Breast epithelium (tissue), 4 donors: ENCODE measurements at regions of chr10 and their contacts with region 1.

Region 1: DNA sequence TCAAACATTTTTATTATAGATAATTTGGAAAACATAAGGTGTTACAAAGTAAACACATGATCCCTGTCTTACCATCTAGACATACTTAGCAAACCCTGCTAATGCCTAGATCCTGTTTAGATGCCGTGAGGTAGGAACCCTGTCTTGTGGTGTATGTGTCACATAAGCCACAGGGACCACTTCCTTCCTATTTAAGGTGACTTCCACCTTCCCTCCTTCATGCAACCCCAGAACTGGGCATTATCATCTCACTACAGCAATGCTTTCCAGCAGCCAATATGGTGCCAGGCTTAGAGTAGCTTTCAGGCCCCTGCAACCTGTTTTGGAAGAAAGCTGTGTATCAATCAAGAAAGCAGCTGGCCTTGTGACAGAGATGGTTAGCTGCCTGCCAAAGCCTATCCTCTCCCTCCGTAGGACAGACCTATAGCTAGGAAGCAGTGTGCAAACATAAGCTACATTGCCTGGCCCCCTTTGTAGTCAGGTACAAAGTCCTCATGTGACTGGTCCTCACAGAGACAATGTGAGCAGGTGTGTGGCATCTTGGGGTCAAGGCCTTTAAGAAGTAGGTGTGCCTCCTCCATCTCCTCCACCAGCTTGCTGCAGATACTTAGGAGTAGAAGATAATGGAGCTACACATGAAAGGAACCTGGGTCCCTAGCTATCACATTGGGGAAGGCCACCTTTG is 146.8 kb downstream of the SPAG6 start:
- DNase-seq: no peak
- H3K4me3 ChIP-seq: no peak overlapping the region
- H3K27ac ChIP-seq: no peak overlapping the region
- H3K4me1 ChIP-seq: no peaks in the 10 kb centered on the region
- H3K27me3 ChIP-seq: peaks cover 0 to under 1% of the 10 kb centered on the region in 2 donors
- CTCF ChIP-seq: no peak
- POLR2A ChIP-seq: no peak

Region 2: DNA sequence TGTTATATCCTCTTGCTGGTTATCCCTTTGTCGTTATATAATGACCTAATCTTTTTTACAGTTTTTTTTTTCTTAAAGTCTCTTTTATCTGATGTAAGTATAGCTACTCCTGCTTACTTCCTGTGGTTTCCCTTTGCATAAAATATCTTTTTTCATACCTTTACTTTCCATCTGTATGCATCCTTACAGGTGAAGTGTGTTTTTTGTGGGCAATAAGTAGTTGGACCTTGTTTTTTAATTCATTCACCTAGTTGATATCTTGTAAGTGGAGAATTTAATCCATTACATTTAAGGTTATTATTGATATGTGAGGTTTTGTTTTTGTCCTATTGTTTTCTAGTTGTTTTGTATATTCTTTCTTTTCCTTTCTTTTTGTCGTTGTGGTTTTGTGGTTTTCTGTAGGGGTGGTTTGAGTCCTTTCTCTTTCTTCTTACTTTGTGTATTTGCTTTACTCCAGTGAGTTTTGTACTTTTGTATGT is 789.4 kb before region 1 on chr10:
- intact Hi-C with region 1: no loop called
- DNase-seq: no peak
- H3K4me3 ChIP-seq: no peak overlapping the region
- H3K27ac ChIP-seq: no peak overlapping the region
- H3K4me1 ChIP-seq: no peaks in the 10 kb centered on the region
- H3K27me3 ChIP-seq: no peaks in the 10 kb centered on the region
- CTCF ChIP-seq: no peak
- POLR2A ChIP-seq: no peak

Region 3: DNA sequence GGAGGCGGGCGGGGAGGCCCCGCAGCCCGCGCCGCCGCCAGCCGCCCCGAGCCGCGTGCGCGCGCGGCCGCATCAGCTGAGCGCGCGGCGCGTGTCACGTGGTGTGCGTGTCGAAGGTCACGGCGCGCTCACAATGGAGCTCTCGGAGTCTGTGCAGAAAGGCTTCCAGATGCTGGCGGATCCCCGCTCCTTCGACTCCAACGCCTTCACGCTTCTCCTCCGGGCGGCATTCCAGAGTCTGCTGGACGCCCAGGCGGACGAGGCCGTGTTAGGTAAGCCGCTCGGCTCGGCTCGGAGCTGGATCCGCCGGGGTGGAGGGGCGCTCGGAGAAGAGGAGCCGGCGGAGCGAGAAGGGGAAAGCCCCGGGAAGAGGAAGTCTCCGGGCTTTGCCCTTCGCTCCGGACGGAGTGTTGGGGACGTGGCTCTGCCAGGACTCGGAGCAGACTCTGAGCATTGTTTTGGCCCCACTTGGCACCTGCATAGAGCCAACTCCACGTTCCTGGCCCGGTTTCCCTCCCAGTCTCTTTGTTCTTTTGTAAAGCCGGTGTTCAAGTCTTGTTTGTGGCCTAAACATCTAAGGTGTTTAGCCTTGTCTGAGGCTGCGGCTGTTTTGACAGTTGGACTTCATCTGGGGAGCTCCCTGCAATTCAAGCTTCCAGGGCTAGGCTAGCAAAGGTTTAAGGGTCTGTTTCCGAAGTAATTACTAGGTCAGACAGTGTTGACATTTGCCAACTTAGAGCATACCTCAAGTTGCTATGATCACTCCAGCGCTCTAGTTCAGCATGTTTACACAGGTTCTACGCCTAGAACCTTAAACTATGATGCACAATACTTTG is 175.6 kb before region 1 on chr10 and contains the start of gene COMMD3:
- intact Hi-C with region 1: no loop called
- DNase-seq: peak; percentile 79 to 83
- H3K4me3 ChIP-seq: peak within 1 kb of the TSS; percentile 79 to 83 (median 83)
- H3K27ac ChIP-seq: peak within 1 kb of the TSS; percentile 93 to 94
- H3K4me1 ChIP-seq: no peaks in the 10 kb centered on the region
- H3K27me3 ChIP-seq: no peaks in the 10 kb centered on the region
- CTCF ChIP-seq: no peak
- POLR2A ChIP-seq: peak; percentile 42
- total RNA-seq, gene COMMD3: 30.1 to 51.4 (median 35.7) TPM

Region 4: GRCh38 chr10:22443175-22443901 is 48.7 kb before region 1 on chr10:
- intact Hi-C with region 1: no loop called
- DNase-seq: no peak
- H3K4me3 ChIP-seq: no peak overlapping the region
- H3K27ac ChIP-seq: no peak overlapping the region
- H3K4me1 ChIP-seq: peaks cover 0 to 3% of the 10 kb centered on the region in 2 donors
- H3K27me3 ChIP-seq: no peaks in the 10 kb centered on the region
- CTCF ChIP-seq: no peak
- POLR2A ChIP-seq: no peak

Region 5: GRCh38 chr10:22503315-22504076 is 11.4 kb after region 1 on chr10:
- intact Hi-C with region 1: loop called (anchors 1 kb)
- DNase-seq: no peak
- H3K4me3 ChIP-seq: no peak overlapping the region
- H3K27ac ChIP-seq: no peak overlapping the region
- H3K4me1 ChIP-seq: no peaks in the 10 kb centered on the region
- H3K27me3 ChIP-seq: no peaks in the 10 kb centered on the region
- CTCF ChIP-seq: no peak
- POLR2A ChIP-seq: no peak